GM12878 (cell line): ENCODE measurements at regions of chr5 and their contacts with region 1.

Region 1: DNA sequence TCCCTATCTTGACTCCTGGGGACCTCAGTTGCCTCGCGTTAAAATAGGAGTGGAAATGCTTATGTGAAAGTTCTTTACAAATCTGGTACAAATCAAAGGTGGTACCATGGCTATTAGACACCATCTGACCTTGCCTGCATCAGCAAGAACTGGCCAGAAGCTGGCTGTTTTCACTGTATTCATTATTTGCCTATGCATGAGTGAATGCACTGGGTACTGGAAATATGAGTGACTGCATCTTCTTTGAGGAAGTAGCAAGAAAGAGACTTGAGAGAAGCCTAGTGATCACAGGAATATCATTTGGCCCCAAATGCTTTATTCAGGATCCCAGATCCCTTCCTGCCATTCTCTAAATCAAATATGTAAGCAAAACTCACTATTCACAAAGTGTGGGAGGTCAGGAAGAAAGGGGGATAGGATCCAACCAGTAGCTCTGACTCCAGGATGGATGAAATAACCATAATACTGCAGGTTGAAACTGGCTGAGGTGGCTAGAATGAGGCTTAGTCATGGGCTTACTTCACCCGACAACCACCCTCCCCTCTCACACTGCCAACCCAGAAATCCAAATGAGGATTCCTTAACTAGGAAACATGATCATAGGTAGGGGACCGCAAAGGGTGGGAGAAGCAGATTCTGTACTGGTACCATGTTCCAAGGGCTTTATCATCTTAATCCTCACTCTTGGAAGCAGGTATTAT is 56.7 kb downstream of the FAM114A2 start:
- DNase-seq: no peak
- ATAC-seq: no peak
- H3K4me3 ChIP-seq: no peak overlapping the region
- H3K27ac ChIP-seq: no peak overlapping the region
- H3K4me1 ChIP-seq: no peaks in the 10 kb centered on the region
- H3K27me3 ChIP-seq: peaks cover under 1 to 2% of the 10 kb centered on the region in 2 experiments; a peak in 2 of 4 replicates
- CTCF ChIP-seq: no peak
- EP300 ChIP-seq: no peak
- POLR2A ChIP-seq: no peak
- RAD21 ChIP-seq: no peak

Region 2: GRCh38 chr5:153782589-153783361 is 199.3 kb before region 1 on chr5:
- CTCF ChIA-PET with region 1: no interaction called
- POLR2A ChIA-PET with region 1: no interaction called
- RAD21 ChIA-PET with region 1: no interaction called
- SMC1A ChIA-PET with region 1: no interaction called
- in situ Hi-C with region 1: no loop called
- intact Hi-C with region 1: no loop called
- DNase-seq: no peak
- ATAC-seq: no peak
- H3K4me3 ChIP-seq: no peak overlapping the region
- H3K27ac ChIP-seq: no peak overlapping the region
- H3K4me1 ChIP-seq: no peaks in the 10 kb centered on the region
- H3K27me3 ChIP-seq: no peaks in the 10 kb centered on the region
- CTCF ChIP-seq: no peak
- EP300 ChIP-seq: no peak
- POLR2A ChIP-seq: no peak
- RAD21 ChIP-seq: no peak

Region 3: DNA sequence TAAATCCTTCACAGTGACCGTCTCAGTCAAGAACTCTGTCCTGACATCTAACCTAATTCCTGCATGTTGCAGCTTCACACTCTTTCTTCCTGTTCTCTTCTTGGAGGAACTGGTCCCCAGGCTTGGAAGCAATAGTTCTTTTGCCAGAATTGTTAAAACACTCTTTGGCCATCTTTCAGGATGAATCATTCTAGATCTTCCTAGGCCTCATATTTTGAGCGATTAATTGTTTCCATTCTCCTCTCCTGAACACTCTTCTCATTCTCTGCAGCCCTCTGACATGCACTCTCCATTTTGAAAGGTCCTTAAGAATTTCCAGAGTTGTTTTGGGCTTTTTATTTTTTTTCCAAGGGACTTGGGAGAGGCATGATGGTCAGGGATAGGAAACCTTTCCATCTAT is 29.2 kb before region 1 on chr5:
- CTCF ChIA-PET with region 1: no interaction called
- POLR2A ChIA-PET with region 1: no interaction called
- RAD21 ChIA-PET with region 1: no interaction called
- SMC1A ChIA-PET with region 1: no interaction called
- in situ Hi-C with region 1: no loop called
- intact Hi-C with region 1: no loop called
- DNase-seq: no peak
- ATAC-seq: no peak
- H3K4me3 ChIP-seq: no peak overlapping the region
- H3K27ac ChIP-seq: no peak overlapping the region
- H3K4me1 ChIP-seq: no peaks in the 10 kb centered on the region
- H3K27me3 ChIP-seq: no peaks in the 10 kb centered on the region; a peak in 1 of 4 replicates
- CTCF ChIP-seq: no peak
- EP300 ChIP-seq: no peak
- POLR2A ChIP-seq: no peak
- RAD21 ChIP-seq: no peak

Region 4: GRCh38 chr5:154010660-154011059 is 28.6 kb after region 1 on chr5:
- CTCF ChIA-PET with region 1: no interaction called
- POLR2A ChIA-PET with region 1: no interaction called
- RAD21 ChIA-PET with region 1: no interaction called
- SMC1A ChIA-PET with region 1: no interaction called
- in situ Hi-C with region 1: no loop called
- intact Hi-C with region 1: no loop called
- DNase-seq: no peak
- ATAC-seq: no peak
- H3K4me3 ChIP-seq: no peak overlapping the region
- H3K27ac ChIP-seq: no peak overlapping the region
- H3K4me1 ChIP-seq: no peaks in the 10 kb centered on the region
- H3K27me3 ChIP-seq: no peaks in the 10 kb centered on the region
- CTCF ChIP-seq: no peak
- EP300 ChIP-seq: no peak
- POLR2A ChIP-seq: no peak
- RAD21 ChIP-seq: no peak

Region 5: DNA sequence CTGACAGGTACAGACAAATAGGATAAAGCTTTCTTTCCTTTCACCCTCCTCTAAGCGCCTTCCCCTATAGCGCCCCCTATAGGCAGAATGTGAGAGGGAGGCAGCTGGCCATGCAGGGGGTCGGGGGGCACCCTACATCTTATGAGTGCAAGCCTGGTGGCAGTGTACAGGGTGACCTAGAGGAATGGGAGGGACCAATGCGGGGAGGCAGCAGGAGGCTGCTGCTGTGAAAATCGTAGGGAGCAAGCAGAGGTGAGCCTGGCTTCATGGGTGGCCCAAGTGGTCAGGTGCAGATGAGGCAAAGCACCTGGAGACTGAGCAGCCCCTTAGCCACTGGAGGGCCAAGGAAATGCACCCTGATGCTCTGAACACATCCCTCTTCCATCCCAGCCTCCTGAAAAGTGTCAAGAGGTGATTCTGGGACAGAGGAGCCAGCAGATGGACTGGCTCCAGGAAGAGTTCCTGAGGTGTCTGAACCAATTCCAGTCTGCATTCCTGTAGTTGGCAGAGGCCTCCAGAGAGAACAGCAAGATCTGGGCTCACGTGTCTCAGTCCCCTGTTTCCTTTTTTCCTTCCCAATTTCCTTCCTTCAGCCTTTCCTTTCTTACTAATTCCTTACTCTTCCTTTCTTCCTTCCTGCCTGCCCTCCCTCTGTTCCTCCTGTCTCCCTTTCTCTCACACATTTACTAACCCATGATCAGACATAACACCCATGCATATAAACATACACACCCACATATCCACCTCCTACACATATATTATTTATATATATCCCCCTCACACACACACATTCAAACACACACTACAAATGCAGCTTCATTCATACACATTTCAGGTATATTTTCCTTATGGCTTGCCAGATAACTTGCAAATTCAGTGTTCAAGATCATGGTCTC is 175.7 kb after region 1 on chr5:
- CTCF ChIA-PET with region 1: no interaction called
- POLR2A ChIA-PET with region 1: no interaction called
- RAD21 ChIA-PET with region 1: no interaction called
- SMC1A ChIA-PET with region 1: no interaction called
- in situ Hi-C with region 1: loop called (anchors 10 kb)
- intact Hi-C with region 1: no loop called
- DNase-seq: no peak
- ATAC-seq: peak; percentile 36; the same call in 1 of the 3 replicates
- H3K4me3 ChIP-seq: no peak overlapping the region
- H3K27ac ChIP-seq: no peak overlapping the region
- H3K4me1 ChIP-seq: no peaks in the 10 kb centered on the region
- H3K27me3 ChIP-seq: peaks cover 0 to 3% of the 10 kb centered on the region in 2 experiments; a peak in 1 of 4 replicates
- CTCF ChIP-seq: peak; percentile 15 to 44 (median 44); a peak in 5 of 6 replicates
- EP300 ChIP-seq: no peak
- POLR2A ChIP-seq: no peak
- RAD21 ChIP-seq: no peak

Region 6: DNA sequence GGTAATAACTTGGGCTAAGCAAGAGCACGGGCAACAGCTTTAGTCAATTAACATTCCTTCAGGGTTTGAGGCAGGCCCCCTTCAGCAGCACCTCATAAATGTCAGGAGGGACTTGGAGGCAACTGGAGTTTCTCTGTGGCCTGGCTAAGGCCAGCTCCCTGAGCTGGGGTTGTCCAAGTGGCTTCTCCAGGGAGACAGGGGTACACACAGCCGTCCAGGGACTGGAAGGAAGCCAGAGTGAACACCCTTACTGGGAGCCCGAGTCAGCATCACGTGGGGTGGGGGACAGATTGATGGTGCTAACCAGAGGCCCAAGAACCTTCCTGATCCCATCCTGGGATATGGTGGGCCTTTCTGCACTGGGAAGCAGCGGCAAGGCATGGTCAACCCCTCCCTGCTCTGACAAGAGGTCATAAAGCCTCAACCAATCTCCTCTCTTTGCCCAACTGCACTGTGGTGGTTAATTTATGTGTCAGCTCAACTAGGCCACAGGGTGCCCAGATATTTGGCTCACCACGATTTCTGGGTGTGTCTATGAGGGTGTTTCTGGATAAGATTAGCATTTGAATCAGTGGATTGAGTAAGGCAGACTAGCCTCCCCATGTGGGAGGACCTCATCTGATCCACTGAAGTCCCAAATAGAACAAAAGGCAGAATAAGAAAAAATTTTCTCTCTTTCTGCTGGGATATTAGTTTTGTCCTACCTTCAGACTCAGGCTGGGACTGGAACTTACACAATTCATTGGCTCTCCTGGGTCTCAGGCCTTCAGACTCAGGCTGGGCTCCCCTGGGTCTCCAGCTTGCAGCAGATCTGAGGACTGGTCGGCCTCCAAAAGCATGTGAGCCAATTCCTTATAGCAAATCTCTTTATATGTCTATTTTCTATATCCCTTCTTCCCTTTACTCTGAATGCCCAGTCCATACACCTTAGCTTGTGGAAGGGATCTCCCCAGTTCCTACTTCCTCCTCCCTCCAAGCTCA is 645.9 kb after region 1 on chr5:
- CTCF ChIA-PET with region 1: no interaction called
- POLR2A ChIA-PET with region 1: no interaction called
- RAD21 ChIA-PET with region 1: no interaction called
- SMC1A ChIA-PET with region 1: no interaction called
- in situ Hi-C with region 1: no loop called
- intact Hi-C with region 1: loop called (anchors 5 kb)
- DNase-seq: no peak
- ATAC-seq: no peak
- H3K4me3 ChIP-seq: no peak overlapping the region
- H3K27ac ChIP-seq: no peak overlapping the region
- H3K4me1 ChIP-seq: no peaks in the 10 kb centered on the region
- H3K27me3 ChIP-seq: no peaks in the 10 kb centered on the region; a peak in 1 of 4 replicates
- CTCF ChIP-seq: no peak
- EP300 ChIP-seq: no peak
- POLR2A ChIP-seq: no peak
- RAD21 ChIP-seq: no peak